Endothelial cell of umbilical vein (primary cell): ENCODE measurements at regions of chr22 and their contacts with region 1.

Region 1: GRCh38 chr22:18077639-18078328 is at the start of gene PEX26:
- DNase-seq: peak; percentile 93
- H3K4me3 ChIP-seq: peak within 1 kb of the TSS; percentile 83 to 90 (median 86)
- H3K27ac ChIP-seq: peak within 1 kb of the TSS; percentile 56
- H3K4me1 ChIP-seq: peaks cover 21% of the 10 kb centered on the region
- H3K27me3 ChIP-seq: no peaks in the 10 kb centered on the region
- CTCF ChIP-seq: no peak
- POLR2A ChIP-seq: no peak
- total RNA-seq, gene PEX26: 40.9 and 44.4 TPM in 2 replicates

Region 2: GRCh38 chr22:17077255-17077654 is 1000.5 kb before region 1 on chr22:
- CTCF ChIA-PET with region 1: interaction called, 11 read pairs
- POLR2A ChIA-PET with region 1: no interaction called
- dilution Hi-C with region 1: no loop called
- intact Hi-C with region 1: no loop called
- DNase-seq: no peak
- H3K4me3 ChIP-seq: no peak overlapping the region
- H3K27ac ChIP-seq: no peak overlapping the region
- H3K4me1 ChIP-seq: peaks cover 3% of the 10 kb centered on the region
- H3K27me3 ChIP-seq: no peaks in the 10 kb centered on the region
- CTCF ChIP-seq: no peak
- POLR2A ChIP-seq: no peak

Region 3: DNA sequence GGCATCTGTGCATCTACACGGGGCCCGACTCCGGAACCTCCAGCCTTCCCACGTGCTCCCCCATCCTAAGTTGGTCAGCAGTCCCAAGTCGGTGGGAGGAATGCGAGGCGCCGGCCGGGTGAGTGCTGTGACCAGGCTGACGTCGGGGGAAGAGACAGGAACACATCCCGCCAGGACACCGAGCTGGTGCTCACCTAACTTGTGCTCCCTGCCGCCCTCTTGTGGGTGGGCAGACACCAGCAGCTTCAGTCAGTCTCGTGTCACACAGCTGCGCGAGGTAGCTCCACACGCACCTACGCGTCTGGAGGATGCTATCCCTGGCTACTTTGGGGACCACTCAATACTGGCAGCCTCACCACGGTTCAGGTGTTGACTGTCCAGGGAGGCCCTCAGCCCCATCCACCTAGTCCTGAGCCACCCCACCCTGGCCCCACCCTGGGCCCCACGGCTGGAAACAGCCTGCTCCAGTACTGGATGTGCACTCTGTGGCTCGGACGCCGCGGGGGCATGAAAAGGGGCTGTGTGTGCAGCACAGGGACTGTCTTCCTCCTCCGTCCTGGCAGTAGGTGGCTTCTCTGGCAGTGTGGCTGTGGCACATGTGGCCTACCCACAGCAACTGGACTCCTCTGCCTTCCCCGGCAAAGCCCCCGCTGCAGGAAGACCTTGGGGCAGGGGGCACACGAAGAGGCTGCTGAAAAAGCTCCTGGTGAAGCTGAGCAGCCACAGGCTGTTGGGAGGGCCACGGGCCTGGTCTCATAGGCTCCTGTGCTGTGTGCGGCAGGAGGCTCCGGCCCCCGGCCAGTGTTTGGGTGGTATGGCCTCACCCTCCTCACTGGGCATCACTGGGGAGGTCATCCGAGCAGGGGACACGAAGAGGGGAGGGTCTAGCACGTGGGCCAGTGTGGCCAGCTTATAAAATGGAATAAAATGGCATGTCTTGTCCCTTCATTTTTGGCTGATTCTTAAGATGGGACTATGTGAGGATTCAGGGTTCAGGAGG is 292.3 kb before region 1 on chr22:
- CTCF ChIA-PET with region 1: interaction called, 14 read pairs
- POLR2A ChIA-PET with region 1: no interaction called
- dilution Hi-C with region 1: no loop called
- intact Hi-C with region 1: no loop called
- DNase-seq: peak; percentile 11
- H3K4me3 ChIP-seq: no peak overlapping the region
- H3K27ac ChIP-seq: no peak overlapping the region
- H3K4me1 ChIP-seq: peaks cover 9% of the 10 kb centered on the region
- H3K27me3 ChIP-seq: no peaks in the 10 kb centered on the region
- CTCF ChIP-seq: peak; percentile 42 to 64
- POLR2A ChIP-seq: no peak

Region 4: DNA sequence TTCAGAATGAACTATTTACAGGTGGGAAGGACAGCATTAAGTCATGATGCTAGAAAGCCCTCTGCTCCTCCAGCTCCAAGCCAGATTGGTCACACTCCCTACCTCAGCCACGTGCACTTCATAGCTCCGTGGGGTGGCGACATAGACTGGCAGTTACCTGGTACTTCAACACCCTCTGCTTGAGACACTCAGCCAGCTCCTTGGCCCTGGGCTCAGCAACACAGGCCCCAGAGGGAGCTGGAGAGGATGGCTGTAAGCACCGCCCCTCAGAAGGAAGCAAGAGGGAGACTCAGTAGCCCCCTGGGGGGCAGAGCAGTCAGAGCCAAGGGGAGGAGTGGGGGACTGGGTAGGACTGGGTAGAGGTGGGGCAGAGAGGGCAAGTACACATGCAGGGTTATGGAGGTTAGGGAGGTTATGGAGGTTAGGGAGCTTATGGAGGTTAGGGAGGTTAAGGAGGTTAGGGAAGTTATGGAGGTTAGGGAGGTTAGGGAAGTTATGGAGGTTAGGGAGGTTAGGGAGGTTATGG is 201.4 kb before region 1 on chr22:
- CTCF ChIA-PET with region 1: interaction called, 17 read pairs
- POLR2A ChIA-PET with region 1: no interaction called
- dilution Hi-C with region 1: no loop called
- intact Hi-C with region 1: no loop called
- DNase-seq: no peak
- H3K4me3 ChIP-seq: no peak overlapping the region
- H3K27ac ChIP-seq: no peak overlapping the region
- H3K4me1 ChIP-seq: no peaks in the 10 kb centered on the region
- H3K27me3 ChIP-seq: no peaks in the 10 kb centered on the region
- CTCF ChIP-seq: no peak
- POLR2A ChIP-seq: no peak

Region 5: GRCh38 chr22:17910561-17911311 is 167.0 kb before region 1 on chr22:
- CTCF ChIA-PET with region 1: interaction called, 44 read pairs
- POLR2A ChIA-PET with region 1: no interaction called
- dilution Hi-C with region 1: no loop called
- intact Hi-C with region 1: loop called (anchors 1 kb)
- DNase-seq: peak; percentile 94
- H3K4me3 ChIP-seq: no peak overlapping the region
- H3K27ac ChIP-seq: peak overlapping the region; percentile 69
- H3K4me1 ChIP-seq: peaks cover 20% of the 10 kb centered on the region
- H3K27me3 ChIP-seq: no peaks in the 10 kb centered on the region
- CTCF ChIP-seq: peak; percentile 13 to 40
- POLR2A ChIP-seq: no peak

Region 6: DNA sequence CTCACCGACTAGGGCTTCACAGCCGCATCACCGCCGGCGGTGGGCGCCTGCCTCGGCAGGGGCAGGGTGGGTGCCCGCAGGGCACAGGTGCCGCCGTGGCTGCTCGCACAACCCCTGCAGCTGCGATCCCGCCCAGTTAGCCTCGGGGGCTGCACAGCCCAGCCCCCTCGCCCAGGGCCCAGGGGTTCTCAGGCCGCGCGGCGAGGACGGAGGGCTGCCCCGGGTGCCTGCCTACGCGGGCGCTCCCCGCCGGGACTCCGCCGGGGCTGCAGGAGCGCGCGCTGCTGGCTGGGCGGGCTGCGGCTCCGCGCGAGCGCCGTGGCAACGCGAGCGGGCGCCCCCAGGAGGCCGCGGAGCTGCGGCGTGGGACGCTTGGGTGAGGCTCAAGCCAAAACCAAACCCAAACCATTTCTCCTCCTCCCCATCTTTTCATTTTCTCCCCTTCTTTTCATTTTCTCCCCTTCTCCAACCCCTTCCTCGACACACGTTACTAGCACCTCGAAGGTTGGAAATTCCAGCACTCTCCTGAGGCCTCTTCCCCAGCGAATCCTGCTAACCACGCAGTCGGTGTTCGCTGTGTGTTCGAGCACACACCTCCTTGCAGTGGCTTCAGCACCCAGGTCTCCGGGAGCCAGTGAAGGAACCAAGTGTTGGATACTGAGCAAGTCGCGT is 53.4 kb before region 1 on chr22 and contains the start of gene MICAL3:
- CTCF ChIA-PET with region 1: interaction called, 15 read pairs
- POLR2A ChIA-PET with region 1: no interaction called
- dilution Hi-C with region 1: no loop called
- intact Hi-C with region 1: loop called (anchors 2 kb)
- DNase-seq: peak; percentile 64
- H3K4me3 ChIP-seq: peak within 1 kb of the TSS; percentile 41 to 61 (median 48)
- H3K27ac ChIP-seq: no peak within 1 kb of the TSS
- H3K4me1 ChIP-seq: peaks cover 13% of the 10 kb centered on the region
- H3K27me3 ChIP-seq: peaks cover 12 to 33% of the 10 kb centered on the region in 2 experiments
- CTCF ChIP-seq: peak; percentile 73 to 76
- POLR2A ChIP-seq: no peak
- total RNA-seq, gene MICAL3: 63.4 and 63.7 TPM in 2 replicates

Region 7: GRCh38 chr22:18148293-18148965 is 70.6 kb after region 1 on chr22:
- CTCF ChIA-PET with region 1: interaction called, 13 read pairs
- POLR2A ChIA-PET with region 1: no interaction called
- dilution Hi-C with region 1: no loop called
- intact Hi-C with region 1: no loop called
- DNase-seq: no peak
- H3K4me3 ChIP-seq: no peak overlapping the region
- H3K27ac ChIP-seq: no peak overlapping the region
- H3K4me1 ChIP-seq: peaks cover 11% of the 10 kb centered on the region
- H3K27me3 ChIP-seq: no peaks in the 10 kb centered on the region
- CTCF ChIP-seq: no peak
- POLR2A ChIP-seq: no peak